CD14-positive monocyte (primary cell): ENCODE measurements at regions of chr17 and their contacts with region 1.

Region 1: GRCh38 chr17:28717578-28718333 is at the start of gene RAB34:
- DNase-seq: peak; percentile 66 to 80 (median 70)
- H3K4me3 ChIP-seq: peak within 1 kb of the TSS; percentile 50 to 78 (median 55)
- H3K4me3 Mint-ChIP-seq: peak within 1 kb of the TSS; percentile 93 to 94
- H3K27ac ChIP-seq: peak within 1 kb of the TSS; percentile 5 to 61
- H3K27ac Mint-ChIP-seq: peak within 1 kb of the TSS; percentile 83 to 92 (median 89)
- H3K4me1 ChIP-seq: peaks cover 45 to 56% of the 10 kb centered on the region in 2 donors
- H3K4me1 Mint-ChIP-seq: peaks cover 37% of the 10 kb centered on the region
- H3K27me3 ChIP-seq: no peaks in the 10 kb centered on the region
- H3K27me3 Mint-ChIP-seq: peaks cover 0 to 5% (median 2%) of the 10 kb centered on the region in 3 donors
- CTCF ChIP-seq: peak; percentile 20
- polyA plus RNA-seq, gene RAB34: 66.7 to 93.3 (median 79.1) TPM

Region 2: DNA sequence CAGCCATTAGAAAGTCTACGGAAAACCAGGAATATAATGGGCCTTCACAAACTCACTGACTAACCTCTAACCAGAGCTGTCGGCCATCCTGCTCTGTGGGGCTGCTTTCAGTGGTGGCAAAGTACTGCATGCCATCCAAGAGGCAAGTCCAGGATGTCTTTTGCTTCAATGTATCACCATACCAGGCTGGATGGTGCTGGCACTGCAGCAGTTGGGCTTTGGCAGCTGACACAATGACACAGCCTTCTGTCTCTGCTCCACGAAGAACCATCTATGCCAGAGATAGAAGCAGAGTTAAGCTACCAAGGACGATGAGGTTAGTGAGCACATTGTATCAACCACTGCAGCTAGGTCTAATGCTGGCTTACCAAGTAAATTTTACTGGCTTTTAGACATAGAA is 94.1 kb before region 1 on chr17:
- intact Hi-C with region 1: no loop called
- DNase-seq: no peak
- H3K4me3 ChIP-seq: no peak overlapping the region
- H3K4me3 Mint-ChIP-seq: no peak overlapping the region
- H3K27ac ChIP-seq: peak overlapping the region in 1 of 2 donors; percentile 14
- H3K27ac Mint-ChIP-seq: no peak overlapping the region
- H3K4me1 ChIP-seq: no peaks in the 10 kb centered on the region
- H3K4me1 Mint-ChIP-seq: no peaks in the 10 kb centered on the region
- H3K27me3 ChIP-seq: no peaks in the 10 kb centered on the region
- H3K27me3 Mint-ChIP-seq: no peaks in the 10 kb centered on the region
- CTCF ChIP-seq: no peak

Region 3: GRCh38 chr17:28661635-28662537 is 55.9 kb before region 1 on chr17 and contains the starts of genes SDF2 and SUPT6H:
- intact Hi-C with region 1: loop called in 1 of 2 experiments (anchors 5 kb)
- DNase-seq: peak; percentile 88 to 90 (median 88)
- H3K4me3 ChIP-seq: peak within 1 kb of the TSS; percentile 64 to 91 (median 71)
- H3K4me3 Mint-ChIP-seq: peak within 1 kb of the TSS; percentile 97 to 99
- H3K27ac ChIP-seq: peak within 1 kb of the TSS; percentile 93 to 99
- H3K27ac Mint-ChIP-seq: peak within 1 kb of the TSS; percentile 99 to 100 (median 100)
- H3K4me1 ChIP-seq: peaks cover 19 to 24% of the 10 kb centered on the region in 2 donors
- H3K4me1 Mint-ChIP-seq: peaks cover 35% of the 10 kb centered on the region
- H3K27me3 ChIP-seq: no peaks in the 10 kb centered on the region
- H3K27me3 Mint-ChIP-seq: peaks cover 0 to 2% (median 0%) of the 10 kb centered on the region in 3 donors
- CTCF ChIP-seq: no peak
- polyA plus RNA-seq, gene SDF2: 52.9 to 103 (median 84.5) TPM
- polyA plus RNA-seq, gene SUPT6H: 3.8 to 33.9 (median 7.8) TPM

Region 4: GRCh38 chr17:28896884-28897768 is 179.4 kb after region 1 on chr17 and contains the start of gene FLOT2:
- intact Hi-C with region 1: loop called in 1 of 2 experiments (anchors 5 kb)
- DNase-seq: peak; percentile 37 to 92 (median 79)
- H3K4me3 ChIP-seq: peak within 1 kb of the TSS; percentile 79 to 98 (median 86)
- H3K4me3 Mint-ChIP-seq: peak within 1 kb of the TSS; percentile 92 to 93
- H3K27ac ChIP-seq: peak within 1 kb of the TSS; percentile 84 to 90
- H3K27ac Mint-ChIP-seq: peak within 1 kb of the TSS; percentile 85 to 96 (median 93)
- H3K4me1 ChIP-seq: peaks cover 63 to 70% of the 10 kb centered on the region in 2 donors
- H3K4me1 Mint-ChIP-seq: peaks cover 56% of the 10 kb centered on the region
- H3K27me3 ChIP-seq: no peaks in the 10 kb centered on the region
- H3K27me3 Mint-ChIP-seq: peaks cover 0 to 7% (median 1%) of the 10 kb centered on the region in 3 donors
- CTCF ChIP-seq: peak; percentile 60
- polyA plus RNA-seq, gene FLOT2: 138 to 271 (median 244) TPM

Region 5: DNA sequence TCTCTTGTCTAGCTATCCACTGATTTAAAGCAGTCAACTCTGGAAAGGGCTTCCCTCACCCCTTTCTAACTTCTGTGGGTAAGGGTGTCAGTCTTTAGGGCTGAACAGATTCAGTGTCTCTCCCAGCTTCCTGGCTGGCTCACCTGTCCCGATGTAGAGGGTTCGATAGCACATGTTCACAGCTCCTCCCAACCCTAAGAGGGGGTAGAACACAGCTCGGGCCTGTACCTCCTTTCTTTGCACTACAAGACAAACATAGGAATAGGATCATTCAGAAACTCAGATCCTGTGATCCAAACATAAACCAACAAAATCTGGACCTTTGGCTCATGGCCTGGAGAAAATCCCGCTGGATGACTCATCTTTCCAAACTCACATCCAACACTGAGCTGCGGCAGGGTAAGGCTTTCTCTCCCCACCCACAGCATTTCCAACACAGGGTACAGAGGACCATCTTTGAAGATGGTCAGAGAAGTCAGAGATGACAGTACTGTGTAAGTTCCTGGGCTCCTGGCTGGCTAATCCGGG is 190.9 kb after region 1 on chr17:
- intact Hi-C with region 1: no loop called
- DNase-seq: no peak
- H3K4me3 ChIP-seq: no peak overlapping the region
- H3K4me3 Mint-ChIP-seq: no peak overlapping the region
- H3K27ac ChIP-seq: no peak overlapping the region
- H3K27ac Mint-ChIP-seq: peak overlapping the region in 4 of 7 donors; percentile 7 to 44 (median 22)
- H3K4me1 ChIP-seq: peaks cover 0 to under 1% of the 10 kb centered on the region in 2 donors
- H3K4me1 Mint-ChIP-seq: peaks cover 3% of the 10 kb centered on the region
- H3K27me3 ChIP-seq: no peaks in the 10 kb centered on the region
- H3K27me3 Mint-ChIP-seq: peaks cover 0 to 2% (median 0%) of the 10 kb centered on the region in 3 donors
- CTCF ChIP-seq: no peak